Breast epithelium (tissue), 4 donors: ENCODE measurements at regions of chr6 and their contacts with region 1.

Region 1: GRCh38 chr6:7865781-7866180 is 44.8 kb downstream of the TXNDC5 start:
- DNase-seq: no peak
- H3K4me3 ChIP-seq: no peak overlapping the region
- H3K27ac ChIP-seq: no peak overlapping the region
- H3K4me1 ChIP-seq: no peaks in the 10 kb centered on the region
- H3K27me3 ChIP-seq: no peaks in the 10 kb centered on the region
- CTCF ChIP-seq: no peak
- POLR2A ChIP-seq: no peak

Region 2: GRCh38 chr6:6414931-6415330 is 1450.8 kb before region 1 on chr6:
- intact Hi-C with region 1: no loop called
- DNase-seq: no peak
- H3K4me3 ChIP-seq: no peak overlapping the region
- H3K27ac ChIP-seq: no peak overlapping the region
- H3K4me1 ChIP-seq: no peaks in the 10 kb centered on the region
- H3K27me3 ChIP-seq: no peaks in the 10 kb centered on the region
- CTCF ChIP-seq: no peak
- POLR2A ChIP-seq: no peak

Region 3: GRCh38 chr6:8983188-8983688 is 1117.5 kb after region 1 on chr6:
- intact Hi-C with region 1: loop called (anchors 5 kb)
- DNase-seq: peak; percentile 38 to 67
- H3K4me3 ChIP-seq: peak overlapping the region in 2 of 3 donors; percentile 4 to 50
- H3K27ac ChIP-seq: no peak overlapping the region
- H3K4me1 ChIP-seq: no peaks in the 10 kb centered on the region
- H3K27me3 ChIP-seq: no peaks in the 10 kb centered on the region
- CTCF ChIP-seq: peak; percentile 52 to 90 (median 87)
- POLR2A ChIP-seq: no peak